ENCODE measurements at regions of chr2 and their contacts with region 1.

Region 1: GRCh38 chr2:96856776-96857673 is 791 bp downstream of the ANKRD39 start:
- DNase-seq: no peak
- ATAC-seq: peak; percentile 4; the same call in 1 of the 2 replicates
- H3K4me3 Mint-ChIP-seq: peak overlapping the region; percentile 80
- H3K27ac Mint-ChIP-seq: no peak overlapping the region
- H3K4me1 Mint-ChIP-seq: peaks cover 21% of the 10 kb centered on the region
- H3K27me3 Mint-ChIP-seq: no peaks in the 10 kb centered on the region
- CTCF ChIP-seq: no peak

Region 2: DNA sequence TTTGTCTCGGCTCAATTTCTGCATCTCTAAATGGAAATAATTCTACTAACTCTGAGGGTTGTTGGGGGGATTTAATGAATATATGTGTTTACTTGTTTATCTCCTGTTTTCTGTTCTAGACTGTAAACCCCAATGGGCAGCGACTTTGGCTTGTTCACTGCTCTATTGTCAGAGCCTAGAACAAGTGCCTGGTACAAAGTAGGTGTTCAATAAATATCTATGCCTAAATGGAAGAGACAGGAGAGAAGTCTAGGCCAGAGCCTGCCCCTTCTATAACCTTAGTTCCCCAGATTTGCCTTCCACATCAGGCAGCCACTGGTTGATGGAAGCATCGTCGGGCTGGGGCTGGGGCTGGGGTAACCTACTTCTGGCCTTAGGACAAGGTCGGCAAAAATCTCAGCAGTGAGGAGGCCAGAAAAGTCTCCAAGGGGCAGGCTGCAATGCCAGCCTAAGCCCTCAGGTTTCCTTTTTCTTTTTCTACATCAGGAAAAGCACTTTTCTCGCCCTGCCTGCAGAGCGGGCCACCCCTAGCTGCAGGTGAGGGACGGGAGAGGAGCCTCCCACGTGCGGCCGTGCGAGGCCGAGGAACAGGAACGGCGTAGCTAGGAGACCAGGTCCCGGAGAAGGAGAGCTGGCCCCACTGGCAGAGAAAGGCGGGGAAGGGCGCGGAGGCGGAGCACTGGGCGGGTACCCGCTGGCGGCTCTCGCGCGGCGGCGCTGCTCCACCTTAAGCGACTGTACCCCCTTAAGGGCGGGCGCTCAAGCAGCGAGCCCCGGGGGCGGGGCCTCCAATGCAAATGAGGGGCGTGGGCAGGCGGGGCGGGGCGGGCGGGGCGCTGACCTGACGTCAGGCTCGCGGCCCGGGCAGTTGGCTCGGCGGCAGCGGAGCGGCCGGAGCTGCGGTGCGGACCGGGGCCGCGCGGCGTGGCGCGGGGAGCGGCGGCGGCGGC is 96.7 kb before region 1 on chr2 and contains the start of gene CNNM4:
- CTCF ChIA-PET with region 1: interaction called, 14 read pairs
- POLR2A ChIA-PET with region 1: no interaction called
- DNase-seq: peak; percentile 96
- ATAC-seq: peak; percentile 85
- H3K4me3 Mint-ChIP-seq: peak within 1 kb of the TSS; percentile 67
- H3K27ac Mint-ChIP-seq: peak within 1 kb of the TSS; percentile 91
- H3K4me1 Mint-ChIP-seq: peaks cover 51% of the 10 kb centered on the region
- H3K27me3 Mint-ChIP-seq: peaks cover 16% of the 10 kb centered on the region
- CTCF ChIP-seq: no peak
- total RNA-seq, gene CNNM4: 13.9 to 14.3 TPM (median 14.0 TPM) in 3 replicates

Region 3: GRCh38 chr2:96806468-96807126 is 50.4 kb before region 1 on chr2:
- CTCF ChIA-PET with region 1: no interaction called
- POLR2A ChIA-PET with region 1: no interaction called
- DNase-seq: no peak
- ATAC-seq: no peak
- H3K4me3 Mint-ChIP-seq: no peak overlapping the region
- H3K27ac Mint-ChIP-seq: no peak overlapping the region
- H3K4me1 Mint-ChIP-seq: no peaks in the 10 kb centered on the region
- H3K27me3 Mint-ChIP-seq: no peaks in the 10 kb centered on the region
- CTCF ChIP-seq: no peak

Region 4: DNA sequence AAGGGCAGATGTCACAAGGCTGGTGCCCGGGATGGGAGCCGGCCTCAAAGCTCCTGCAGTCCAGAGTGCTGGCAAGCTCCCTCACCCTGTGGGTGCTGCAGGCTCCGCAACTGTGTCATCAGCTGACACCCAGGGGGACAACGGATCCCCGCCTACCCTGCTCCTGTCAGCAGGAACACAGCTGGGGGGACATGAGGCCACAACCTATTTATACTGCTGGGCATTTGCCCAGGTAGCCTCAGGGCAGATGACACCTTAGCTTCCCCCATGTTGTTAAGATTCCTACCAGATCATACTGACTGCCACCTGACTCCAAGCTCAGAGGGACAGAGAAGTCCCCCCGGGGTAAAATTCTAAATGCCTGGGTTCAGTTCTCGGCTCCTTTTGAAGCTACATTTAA is 14.4 kb before region 1 on chr2:
- CTCF ChIA-PET with region 1: interaction called, 14 read pairs
- POLR2A ChIA-PET with region 1: interaction called, 5 read pairs
- DNase-seq: no peak
- ATAC-seq: no peak
- H3K4me3 Mint-ChIP-seq: no peak overlapping the region
- H3K27ac Mint-ChIP-seq: no peak overlapping the region
- H3K4me1 Mint-ChIP-seq: peaks cover 5% of the 10 kb centered on the region; the same call in 1 of the 2 replicates
- H3K27me3 Mint-ChIP-seq: no peaks in the 10 kb centered on the region
- CTCF ChIP-seq: no peak

Region 5: DNA sequence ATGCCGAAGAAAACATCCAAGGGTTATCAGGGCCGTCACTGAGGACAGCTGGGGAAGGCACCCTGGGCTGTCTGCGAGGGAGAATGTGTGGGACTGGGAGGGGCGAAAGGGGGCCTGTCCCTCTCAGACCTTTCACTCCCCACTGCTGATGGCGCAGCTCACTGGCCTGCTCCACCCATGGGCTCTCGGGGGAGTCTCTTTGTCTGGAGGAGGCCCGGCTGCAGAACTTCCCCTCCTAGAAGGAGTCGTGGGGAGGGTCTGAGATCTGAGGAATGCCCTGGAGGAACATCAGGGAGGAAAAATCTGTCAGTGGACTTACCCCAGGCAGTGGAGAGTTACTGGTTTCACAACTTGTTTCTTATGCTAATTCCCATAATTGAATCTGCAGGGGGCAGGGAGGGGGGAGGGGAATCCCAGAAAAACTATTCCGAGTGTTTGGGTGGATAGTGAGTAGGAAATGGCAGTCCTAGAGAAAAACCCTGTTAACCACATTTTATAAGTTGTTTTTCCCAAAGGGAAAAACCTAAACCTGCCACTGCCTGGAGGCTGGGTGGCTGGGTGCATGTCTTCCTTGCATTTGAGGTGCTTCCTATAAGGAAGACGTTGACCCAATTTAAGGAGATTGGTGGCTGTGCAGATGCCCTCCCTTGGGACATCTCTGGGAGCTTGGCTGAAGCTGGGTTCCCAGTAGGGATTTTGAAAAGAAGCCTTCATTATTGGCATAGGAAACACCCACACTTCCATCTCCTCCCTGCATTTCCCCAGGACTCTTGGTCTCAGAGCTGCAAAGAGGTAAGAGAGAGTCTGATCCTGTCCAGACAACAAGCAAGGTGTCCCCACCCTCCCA is 24.5 kb after region 1 on chr2:
- CTCF ChIA-PET with region 1: interaction called, 45 read pairs
- POLR2A ChIA-PET with region 1: interaction called, 4 read pairs
- DNase-seq: no peak
- ATAC-seq: peak; percentile 63
- H3K4me3 Mint-ChIP-seq: peak overlapping the region; percentile 47
- H3K27ac Mint-ChIP-seq: peak overlapping the region; percentile 89
- H3K4me1 Mint-ChIP-seq: peaks cover 41% of the 10 kb centered on the region
- H3K27me3 Mint-ChIP-seq: no peaks in the 10 kb centered on the region
- CTCF ChIP-seq: no peak

Region 6: GRCh38 chr2:96913398-96914202 is 56.6 kb after region 1 on chr2:
- CTCF ChIA-PET with region 1: interaction called, 18 read pairs
- POLR2A ChIA-PET with region 1: no interaction called
- DNase-seq: no peak
- ATAC-seq: no peak
- H3K4me3 Mint-ChIP-seq: no peak overlapping the region
- H3K27ac Mint-ChIP-seq: no peak overlapping the region
- H3K4me1 Mint-ChIP-seq: peaks cover 36% of the 10 kb centered on the region
- H3K27me3 Mint-ChIP-seq: peaks cover 40% of the 10 kb centered on the region
- CTCF ChIP-seq: no peak

Region 7: GRCh38 chr2:96951093-96951654 is 94.1 kb after region 1 on chr2:
- CTCF ChIA-PET with region 1: interaction called, 252 read pairs
- POLR2A ChIA-PET with region 1: interaction called, 7 read pairs
- DNase-seq: peak; percentile 91
- ATAC-seq: peak; percentile 96
- H3K4me3 Mint-ChIP-seq: no peak overlapping the region
- H3K27ac Mint-ChIP-seq: no peak overlapping the region
- H3K4me1 Mint-ChIP-seq: peaks cover 11% of the 10 kb centered on the region
- H3K27me3 Mint-ChIP-seq: peaks cover 3% of the 10 kb centered on the region; the same call in 1 of the 2 replicates
- CTCF ChIP-seq: peak; percentile 93